ENCODE measurements at regions of chr20 and their contacts with region 1.

Region 1: GRCh38 chr20:6178537-6178936 is 55.7 kb upstream of the FERMT1 start:
- DNase-seq: peak; percentile 32
- H3K4me3 ChIP-seq: no peak overlapping the region
- H3K27ac ChIP-seq: no peak overlapping the region
- H3K4me1 ChIP-seq: no peaks in the 10 kb centered on the region
- H3K27me3 ChIP-seq: peaks cover 3% of the 10 kb centered on the region
- CTCF ChIP-seq: peak; percentile 36 to 64

Region 2: DNA sequence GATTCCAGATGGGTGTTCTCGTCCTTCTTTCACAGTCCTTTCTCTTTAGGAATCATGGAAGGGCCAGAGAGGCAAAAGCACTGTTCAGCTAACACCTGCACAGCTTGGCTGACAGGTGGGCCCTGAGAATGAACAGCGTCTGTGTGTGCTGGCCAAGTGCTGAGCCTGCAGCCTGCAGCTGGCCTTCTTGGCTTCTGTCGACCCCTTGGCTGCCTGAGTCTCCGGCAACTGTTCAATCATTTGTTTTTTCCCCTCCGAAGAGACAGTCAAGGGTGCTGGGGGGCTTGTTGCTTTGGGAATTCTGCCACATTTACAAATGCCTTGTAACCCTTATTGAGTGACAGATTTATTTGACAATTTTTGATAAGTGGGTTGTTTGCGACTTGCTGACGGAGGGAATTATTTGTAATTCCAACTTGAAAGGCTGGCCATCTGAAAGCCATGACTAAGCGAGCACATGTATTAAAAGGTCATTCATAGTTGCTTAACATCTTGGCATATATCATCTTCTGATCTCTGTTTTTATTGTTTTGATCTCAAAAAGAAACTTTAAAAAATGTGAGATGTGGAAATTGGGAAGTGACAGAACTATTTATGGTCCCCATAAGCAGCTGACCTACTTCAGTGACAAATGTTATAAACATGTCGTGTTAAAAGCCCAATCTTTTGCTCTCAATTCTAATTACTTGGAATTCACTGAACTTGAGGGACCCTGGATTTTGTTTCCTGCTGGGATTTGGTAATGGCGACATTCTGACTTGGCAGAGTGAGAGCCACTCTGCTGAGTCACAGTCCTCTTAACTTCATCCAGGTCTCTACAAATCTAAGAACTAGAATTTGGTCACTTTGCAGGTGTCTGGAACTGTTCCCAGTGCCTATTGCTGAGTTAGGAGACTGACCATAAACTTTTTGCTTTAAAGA is 13.9 kb before region 1 on chr20:
- CTCF ChIA-PET with region 1: no interaction called
- dilution Hi-C with region 1: no loop called
- in situ Hi-C with region 1: no loop called
- intact Hi-C with region 1: no loop called
- DNase-seq: no peak
- H3K4me3 ChIP-seq: no peak overlapping the region
- H3K27ac ChIP-seq: no peak overlapping the region
- H3K4me1 ChIP-seq: no peaks in the 10 kb centered on the region
- H3K27me3 ChIP-seq: no peaks in the 10 kb centered on the region
- CTCF ChIP-seq: no peak

Region 3: DNA sequence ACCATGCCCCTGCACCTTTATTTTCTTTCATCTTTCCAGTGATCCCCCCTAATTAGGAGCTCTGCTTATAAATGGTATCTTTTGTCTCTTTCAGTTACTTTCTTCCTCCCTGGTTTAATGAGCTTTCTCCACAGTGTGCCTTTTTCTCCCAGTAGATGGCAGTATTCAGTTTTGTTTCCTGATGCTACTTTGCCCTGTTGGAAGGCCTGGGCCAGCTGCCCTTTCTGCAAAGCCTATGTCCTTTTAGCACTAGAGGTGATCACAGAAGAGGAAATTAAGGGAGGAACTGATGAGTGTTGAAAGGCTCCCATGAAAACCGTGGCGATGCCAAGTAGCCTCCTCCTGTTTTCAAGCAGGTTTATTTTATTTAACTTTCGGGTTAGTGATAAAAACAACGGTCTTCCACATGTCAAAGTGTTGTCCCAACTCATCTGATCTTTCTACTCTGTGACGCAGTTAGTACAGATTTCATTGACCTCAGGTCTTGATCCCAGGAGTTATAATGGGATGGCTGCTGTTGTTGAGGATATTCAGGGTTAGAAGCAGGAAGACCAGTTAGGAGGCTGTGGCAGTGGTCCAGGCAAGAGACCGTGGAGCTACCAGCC is 404.7 kb after region 1 on chr20:
- CTCF ChIA-PET with region 1: no interaction called
- dilution Hi-C with region 1: no loop called
- in situ Hi-C with region 1: no loop called
- intact Hi-C with region 1: loop called (anchors 5 kb)
- DNase-seq: peak; percentile 58
- H3K4me3 ChIP-seq: no peak overlapping the region
- H3K27ac ChIP-seq: no peak overlapping the region
- H3K4me1 ChIP-seq: peaks cover 10% of the 10 kb centered on the region
- H3K27me3 ChIP-seq: no peaks in the 10 kb centered on the region
- CTCF ChIP-seq: peak; percentile 72 to 80